Motor neuron (in vitro differentiated cells): ENCODE measurements at regions of chr18 and their contacts with region 1.

Region 1: GRCh38 chr18:40179729-40180461 is 1775.1 kb upstream of the PIK3C3 start:
- ATAC-seq: peak in 4 of 8 experiments; percentile 19 to 71 (median 48)
- H3K4me3 ChIP-seq: no peak overlapping the region
- H3K27ac ChIP-seq: no peak overlapping the region
- H3K4me1 ChIP-seq: peaks cover 0 to 5% of the 10 kb centered on the region in 2 donors

Region 2: DNA sequence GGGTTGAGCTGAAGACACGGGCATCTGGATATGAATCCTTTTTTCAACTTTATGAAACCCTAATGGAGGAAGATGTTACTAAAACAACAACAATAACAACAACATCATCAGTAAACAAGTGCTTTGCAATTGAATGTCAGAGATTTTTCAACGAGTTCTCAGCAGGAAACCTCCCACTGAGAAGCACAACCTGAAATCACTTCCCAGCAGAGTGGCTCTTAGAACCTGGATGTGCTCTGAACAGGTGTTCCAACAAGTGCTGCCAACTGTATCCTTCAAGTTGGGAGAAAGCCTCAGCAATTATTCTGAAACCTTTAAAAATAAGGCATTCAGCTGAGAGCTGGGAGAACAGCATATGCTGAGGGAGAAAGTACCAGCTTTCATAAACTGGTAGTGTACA is 991.6 kb before region 1 on chr18:
- in situ Hi-C with region 1: no loop called
- ATAC-seq: no peak
- H3K4me3 ChIP-seq: no peak overlapping the region
- H3K27ac ChIP-seq: no peak overlapping the region
- H3K4me1 ChIP-seq: no peaks in the 10 kb centered on the region

Region 3: DNA sequence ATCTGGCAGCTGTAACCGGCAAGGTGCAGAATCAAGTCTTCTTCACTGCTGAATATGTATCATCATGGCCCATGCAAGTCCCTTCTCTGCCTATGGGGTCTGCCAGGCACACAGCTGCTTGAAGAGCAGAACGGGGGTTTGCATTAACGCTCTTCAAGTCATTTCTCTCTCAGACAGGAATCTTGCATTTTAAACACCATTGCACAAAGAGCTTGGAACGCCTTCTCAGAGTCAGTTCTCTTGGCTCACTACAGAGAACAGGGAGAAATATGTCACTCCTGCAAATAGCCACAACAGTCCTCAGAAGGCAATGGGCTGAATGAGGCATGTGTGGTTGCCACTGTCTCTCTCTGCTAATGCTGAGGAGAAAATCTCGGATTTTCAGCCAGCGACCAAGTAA is 398.3 kb before region 1 on chr18:
- in situ Hi-C with region 1: no loop called
- ATAC-seq: peak in 5 of 8 experiments; percentile 56 to 80 (median 63)
- H3K4me3 ChIP-seq: no peak overlapping the region
- H3K27ac ChIP-seq: no peak overlapping the region
- H3K4me1 ChIP-seq: peaks cover 20 to 23% of the 10 kb centered on the region in 2 donors

Region 4: DNA sequence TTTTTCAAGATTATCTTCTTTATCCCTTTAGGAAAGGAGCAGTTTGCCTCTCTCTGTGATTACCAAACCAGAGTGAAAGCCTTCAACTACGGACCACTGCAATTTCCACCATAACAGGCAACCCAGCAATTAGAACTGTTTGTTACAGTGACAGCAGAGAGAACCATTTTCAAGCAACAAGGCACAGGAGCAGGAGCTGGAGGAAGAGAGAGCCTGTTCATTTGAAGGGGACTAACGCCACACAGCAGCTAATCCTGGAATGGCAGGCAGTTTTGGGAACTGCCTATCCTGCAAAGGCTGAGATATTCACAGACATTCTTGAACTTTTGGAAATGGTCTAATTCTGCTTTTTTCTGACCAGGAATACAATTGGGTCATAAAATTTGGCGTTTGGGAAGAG is 233.3 kb after region 1 on chr18:
- in situ Hi-C with region 1: loop called in 1 of 9 experiments (anchors 25 kb)
- ATAC-seq: peak in 7 of 8 experiments; percentile 71 to 88 (median 87)
- H3K4me3 ChIP-seq: no peak overlapping the region
- H3K27ac ChIP-seq: no peak overlapping the region
- H3K4me1 ChIP-seq: peaks cover 23 to 35% of the 10 kb centered on the region in 2 donors